Spleen (tissue), 13 donors: ENCODE measurements at regions of chr4 and their contacts with region 1.

Region 1: DNA sequence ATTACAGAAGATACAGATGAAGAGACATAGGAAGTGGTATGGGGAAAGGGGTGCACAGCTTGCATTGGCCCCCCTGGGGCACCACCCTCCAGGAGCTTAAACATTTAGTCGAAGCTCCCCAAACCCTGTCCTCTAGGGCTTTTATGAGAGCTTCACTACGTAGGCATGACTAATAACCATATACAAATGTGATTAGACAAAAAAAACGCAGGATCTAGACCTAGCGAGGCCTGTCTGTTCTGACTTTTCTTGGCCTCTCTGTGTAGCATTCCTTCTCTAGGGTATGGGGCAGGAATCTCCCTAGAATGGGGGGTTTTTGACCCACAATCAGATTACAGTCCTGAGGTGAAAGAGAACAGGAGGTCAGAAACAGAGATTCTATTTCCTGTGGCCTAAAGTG is 293.7 kb upstream of the GALNTL6 start:
- DNase-seq: no peak
- H3K4me3 ChIP-seq: no peak overlapping the region
- H3K27ac ChIP-seq: no peak overlapping the region
- H3K4me1 ChIP-seq: no peaks in the 10 kb centered on the region
- H3K27me3 ChIP-seq: no peaks in the 10 kb centered on the region
- CTCF ChIP-seq: no peak
- POLR2A ChIP-seq: no peak

Region 2: DNA sequence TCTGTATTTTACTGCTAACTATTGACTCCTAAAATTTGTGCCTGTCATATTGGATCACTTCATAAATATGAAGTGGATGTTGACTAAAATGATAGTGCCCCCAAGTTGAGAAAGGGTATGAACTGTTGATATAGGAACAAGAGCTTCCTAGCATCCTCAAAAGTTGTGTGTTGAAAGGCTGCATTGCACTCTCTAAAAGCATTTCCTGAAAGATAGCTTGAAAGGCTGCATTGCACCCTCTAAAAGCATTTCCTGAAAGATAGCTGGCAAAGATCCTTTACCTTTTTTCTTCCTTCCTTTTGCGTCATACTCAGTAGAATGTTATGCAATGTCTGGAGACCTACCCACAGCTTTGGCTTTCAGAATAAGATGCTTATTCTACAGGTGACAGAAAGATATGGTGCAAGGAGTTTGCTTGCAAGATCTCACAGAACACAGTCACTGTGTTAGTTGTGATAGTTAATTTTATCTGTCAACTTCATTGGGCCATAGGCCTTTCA is 19.2 kb after region 1 on chr4:
- intact Hi-C with region 1: loop called (anchors 1 kb)
- DNase-seq: no peak
- H3K4me3 ChIP-seq: no peak overlapping the region
- H3K27ac ChIP-seq: no peak overlapping the region
- H3K4me1 ChIP-seq: no peaks in the 10 kb centered on the region
- H3K27me3 ChIP-seq: no peaks in the 10 kb centered on the region
- CTCF ChIP-seq: no peak
- POLR2A ChIP-seq: no peak

Region 3: GRCh38 chr4:171924746-171925376 is 405.4 kb after region 1 on chr4:
- intact Hi-C with region 1: no loop called
- DNase-seq: no peak
- H3K4me3 ChIP-seq: no peak overlapping the region
- H3K27ac ChIP-seq: no peak overlapping the region
- H3K4me1 ChIP-seq: no peaks in the 10 kb centered on the region
- H3K27me3 ChIP-seq: no peaks in the 10 kb centered on the region
- CTCF ChIP-seq: no peak
- POLR2A ChIP-seq: no peak